WTC11 (cell line): ENCODE measurements at regions of chr1 and their contacts with region 1.

Region 1: GRCh38 chr1:157073944-157074767 is 25.5 kb downstream of the ETV3L start:
- DNase-seq: peak; percentile 83
- ATAC-seq: peak; percentile 67
- H3K4me3 Mint-ChIP-seq: no peak overlapping the region
- H3K27ac Mint-ChIP-seq: no peak overlapping the region
- H3K4me1 Mint-ChIP-seq: peaks cover 9% of the 10 kb centered on the region
- H3K27me3 Mint-ChIP-seq: peaks cover 11% of the 10 kb centered on the region
- CTCF ChIP-seq: peak; percentile 46; the same call in 1 of the 2 replicates

Region 2: DNA sequence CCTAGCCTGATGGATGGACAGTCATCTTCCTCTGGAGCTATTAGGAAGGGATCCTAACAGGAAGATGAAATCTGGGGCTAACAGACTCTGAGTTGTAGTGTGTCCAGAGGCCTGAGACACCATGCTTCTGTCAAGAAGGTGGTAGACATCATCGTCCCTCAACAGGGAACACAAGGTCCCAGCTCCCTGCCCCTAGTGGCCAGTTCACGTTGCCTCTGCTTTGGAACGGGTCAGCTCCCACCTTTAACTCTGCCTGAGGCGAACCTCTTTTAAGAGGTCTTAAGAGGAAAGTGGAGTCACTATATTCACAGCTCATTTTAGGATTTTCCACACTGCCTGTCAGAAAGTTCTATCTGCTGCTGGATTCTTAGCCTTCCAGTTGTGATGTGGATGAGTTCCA is 125.4 kb before region 1 on chr1:
- CTCF ChIA-PET with region 1: interaction called, 28 read pairs
- POLR2A ChIA-PET with region 1: no interaction called
- DNase-seq: peak; percentile 45
- ATAC-seq: peak; percentile 89
- H3K4me3 Mint-ChIP-seq: no peak overlapping the region
- H3K27ac Mint-ChIP-seq: no peak overlapping the region
- H3K4me1 Mint-ChIP-seq: no peaks in the 10 kb centered on the region
- H3K27me3 Mint-ChIP-seq: no peaks in the 10 kb centered on the region
- CTCF ChIP-seq: no peak

Region 3: DNA sequence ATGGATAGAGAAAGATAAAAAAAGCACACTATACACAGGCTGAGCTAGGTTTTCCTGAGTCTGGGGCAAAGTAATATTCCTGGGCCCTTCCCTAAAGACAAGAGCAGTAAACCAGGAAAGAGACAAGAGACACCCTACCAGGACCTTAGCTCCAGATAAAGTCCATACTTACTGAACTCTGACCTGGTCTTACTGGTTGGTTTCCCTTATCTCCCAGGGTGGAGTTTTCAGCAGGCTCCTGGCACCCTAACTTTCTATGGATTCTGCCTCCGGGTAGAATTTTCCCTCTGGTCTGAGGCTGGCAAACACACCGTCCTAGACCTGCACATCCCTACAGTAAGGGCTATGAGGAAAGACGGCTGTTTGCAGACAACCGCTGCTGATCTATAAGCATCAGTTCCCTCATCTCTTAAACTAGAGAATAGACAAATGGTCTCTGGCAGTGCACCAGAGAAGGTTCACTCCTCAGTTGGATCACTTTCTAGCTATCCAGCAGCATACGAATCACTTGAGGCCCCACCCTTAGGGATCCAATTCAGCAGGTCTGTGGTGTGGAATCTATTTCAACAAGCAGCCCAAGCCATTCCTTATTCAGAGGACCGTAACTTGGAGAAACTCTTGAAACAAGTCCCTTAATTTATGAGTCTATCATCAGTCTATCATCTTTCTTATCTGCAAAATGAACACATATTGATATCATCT is 80.6 kb before region 1 on chr1:
- CTCF ChIA-PET with region 1: interaction called, 16 read pairs
- POLR2A ChIA-PET with region 1: no interaction called
- DNase-seq: no peak
- ATAC-seq: no peak
- H3K4me3 Mint-ChIP-seq: no peak overlapping the region
- H3K27ac Mint-ChIP-seq: no peak overlapping the region
- H3K4me1 Mint-ChIP-seq: peaks cover 20% of the 10 kb centered on the region
- H3K27me3 Mint-ChIP-seq: no peaks in the 10 kb centered on the region
- CTCF ChIP-seq: no peak

Region 4: DNA sequence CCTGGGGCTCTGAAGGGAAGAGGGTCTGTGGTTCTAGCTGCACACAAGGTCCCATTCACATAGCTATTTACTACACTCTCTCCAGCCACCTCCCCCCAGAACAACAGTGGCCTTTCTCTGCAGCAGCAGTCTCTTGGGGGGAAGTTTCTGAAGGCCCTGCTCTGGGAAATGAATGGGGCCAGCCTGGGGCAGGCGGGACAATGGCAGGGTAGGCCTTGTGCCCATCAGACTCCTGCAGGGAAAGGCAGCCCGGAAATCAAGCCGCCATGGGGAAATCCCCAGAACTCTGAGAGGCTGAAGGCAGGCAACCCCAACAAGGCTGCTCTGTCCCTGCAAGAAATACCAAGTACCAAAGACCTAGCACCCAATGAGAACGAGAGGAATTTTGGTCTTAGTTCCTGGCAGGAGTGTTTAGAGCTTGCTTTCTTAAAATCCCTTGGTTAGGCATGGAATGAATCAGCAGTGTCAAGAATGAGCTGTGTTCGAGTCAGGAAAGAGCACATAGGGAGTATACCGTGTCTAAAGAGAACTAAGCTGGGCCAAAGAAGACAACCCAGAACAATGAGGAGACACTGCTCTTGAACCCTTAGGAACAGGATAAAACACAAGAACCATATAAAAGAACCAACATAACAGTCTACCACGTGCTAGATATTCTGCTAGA is 39.9 kb before region 1 on chr1:
- CTCF ChIA-PET with region 1: no interaction called
- POLR2A ChIA-PET with region 1: no interaction called
- DNase-seq: peak; percentile 18
- ATAC-seq: peak; percentile 67
- H3K4me3 Mint-ChIP-seq: no peak overlapping the region
- H3K27ac Mint-ChIP-seq: peak overlapping the region; percentile 20; the same call in 1 of the 2 replicates
- H3K4me1 Mint-ChIP-seq: peaks cover 9% of the 10 kb centered on the region
- H3K27me3 Mint-ChIP-seq: no peaks in the 10 kb centered on the region
- CTCF ChIP-seq: no peak